IMR-90 (cell line): ENCODE measurements at regions of chr6 and their contacts with region 1.

Region 1: DNA sequence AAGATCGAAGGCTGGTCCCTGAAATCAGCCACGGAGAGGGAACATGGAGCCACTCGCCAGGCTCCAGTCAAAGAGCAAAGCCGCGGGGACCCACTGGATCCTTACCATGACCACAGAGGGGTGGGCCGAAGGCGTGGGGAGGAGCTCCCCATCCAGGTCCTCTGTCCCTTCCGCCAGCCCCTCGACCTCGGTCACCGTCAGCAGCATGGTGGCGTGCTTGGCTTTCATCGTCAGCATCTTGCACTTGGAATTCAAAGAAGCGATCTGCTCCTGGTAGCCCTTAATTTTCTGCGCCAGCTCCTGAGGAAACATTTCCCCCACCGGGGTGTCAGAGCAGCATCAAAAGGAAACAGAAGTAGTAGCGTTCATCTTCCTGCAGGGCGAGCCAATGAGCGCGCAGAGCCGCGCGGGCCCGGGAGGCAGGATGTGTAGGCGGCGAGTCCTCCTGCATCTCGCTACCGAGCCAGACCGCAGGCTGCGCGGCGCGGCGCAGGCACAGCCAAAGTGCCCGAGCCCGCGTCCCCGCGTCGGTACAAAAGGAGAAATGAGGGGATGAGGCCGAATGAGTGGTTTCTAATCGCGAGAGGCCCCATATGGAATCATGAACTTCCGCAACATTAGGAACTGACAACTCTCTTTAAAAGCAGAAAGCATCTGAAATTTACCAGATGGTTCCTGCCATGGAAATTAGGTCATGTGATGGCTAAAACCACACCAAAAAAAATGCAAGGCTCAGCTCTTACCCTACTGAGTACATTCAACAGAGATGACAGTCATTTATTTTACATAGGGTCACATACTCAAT is 335.2 kb downstream of the SYNE1 start:
- DNase-seq: peak; percentile 90
- ATAC-seq: peak; percentile 98
- H3K4me3 ChIP-seq: peak overlapping the region; percentile 77
- H3K27ac ChIP-seq: peak overlapping the region; percentile 86
- H3K4me1 ChIP-seq: peaks cover 5% of the 10 kb centered on the region; the same call in 1 of the 2 replicates
- H3K27me3 ChIP-seq: no peaks in the 10 kb centered on the region
- CTCF ChIP-seq: peak; percentile 49
- POLR2A ChIP-seq: peak; percentile 77
- RAD21 ChIP-seq: peak; percentile 37

Region 2: DNA sequence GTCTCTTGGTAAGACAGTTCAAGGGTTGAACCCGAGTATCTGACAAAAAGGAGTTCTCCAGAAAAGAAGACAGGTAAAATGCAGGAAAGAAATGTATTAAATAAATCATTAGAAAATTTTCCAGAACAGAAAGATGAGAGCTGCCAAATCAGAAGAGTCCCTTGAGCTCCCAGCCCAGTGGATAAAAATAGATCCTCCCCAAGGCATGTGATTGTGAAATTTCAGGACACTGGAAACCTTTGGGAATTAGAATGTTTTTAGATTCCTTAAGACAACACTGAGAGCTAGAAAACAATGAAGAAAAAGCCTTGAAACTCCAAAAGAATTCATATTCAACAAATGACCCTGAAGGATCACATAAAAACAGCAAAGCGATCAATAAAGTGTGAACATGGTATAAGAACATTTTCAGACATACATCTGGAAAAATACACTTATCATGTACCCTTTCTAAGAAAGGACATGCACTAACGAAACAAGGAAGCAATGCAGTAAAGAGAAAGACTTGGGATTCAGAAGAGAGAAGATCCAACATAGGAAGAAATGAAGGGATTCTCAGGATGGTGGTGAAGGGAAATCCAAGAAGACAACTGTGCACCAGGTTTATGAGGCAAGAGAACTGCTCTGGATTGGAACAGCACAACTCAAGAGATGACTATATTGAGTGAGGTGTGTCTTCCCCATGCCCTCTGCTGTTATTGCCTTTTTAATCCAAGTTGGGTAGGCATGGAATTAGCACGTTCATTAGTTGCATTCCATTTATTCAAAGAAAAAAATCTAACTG is 55.2 kb before region 1 on chr6:
- CTCF ChIA-PET with region 1: no interaction called
- POLR2A ChIA-PET with region 1: no interaction called
- dilution Hi-C with region 1: no loop called
- in situ Hi-C with region 1: no loop called
- intact Hi-C with region 1: no loop called
- DNase-seq: peak; percentile 54
- ATAC-seq: peak; percentile 59
- H3K4me3 ChIP-seq: no peak overlapping the region
- H3K27ac ChIP-seq: no peak overlapping the region
- H3K4me1 ChIP-seq: peaks cover 2% of the 10 kb centered on the region
- H3K27me3 ChIP-seq: no peaks in the 10 kb centered on the region
- CTCF ChIP-seq: no peak
- POLR2A ChIP-seq: no peak
- RAD21 ChIP-seq: no peak

Region 3: GRCh38 chr6:152318278-152318677 is 16.3 kb after region 1 on chr6:
- CTCF ChIA-PET with region 1: interaction called, 10 read pairs
- POLR2A ChIA-PET with region 1: interaction called, 6 read pairs
- dilution Hi-C with region 1: no loop called
- in situ Hi-C with region 1: no loop called
- intact Hi-C with region 1: no loop called
- DNase-seq: peak; percentile 43
- ATAC-seq: no peak
- H3K4me3 ChIP-seq: no peak overlapping the region
- H3K27ac ChIP-seq: no peak overlapping the region
- H3K4me1 ChIP-seq: peaks cover 11% of the 10 kb centered on the region
- H3K27me3 ChIP-seq: no peaks in the 10 kb centered on the region
- CTCF ChIP-seq: no peak
- POLR2A ChIP-seq: no peak
- RAD21 ChIP-seq: no peak

Region 4: GRCh38 chr6:152338335-152339125 is 36.6 kb after region 1 on chr6:
- CTCF ChIA-PET with region 1: interaction called, 7 read pairs
- POLR2A ChIA-PET with region 1: no interaction called
- dilution Hi-C with region 1: no loop called
- in situ Hi-C with region 1: no loop called
- intact Hi-C with region 1: loop called (anchors 1 kb)
- DNase-seq: peak; percentile 21
- ATAC-seq: peak; percentile 88
- H3K4me3 ChIP-seq: no peak overlapping the region
- H3K27ac ChIP-seq: no peak overlapping the region
- H3K4me1 ChIP-seq: no peaks in the 10 kb centered on the region
- H3K27me3 ChIP-seq: no peaks in the 10 kb centered on the region
- CTCF ChIP-seq: peak; percentile 65
- POLR2A ChIP-seq: no peak
- RAD21 ChIP-seq: peak; percentile 43; the same call in 1 of the 2 replicates

Region 5: GRCh38 chr6:152669895-152670294 is 367.9 kb after region 1 on chr6:
- CTCF ChIA-PET with region 1: no interaction called
- POLR2A ChIA-PET with region 1: no interaction called
- dilution Hi-C with region 1: no loop called
- in situ Hi-C with region 1: no loop called
- intact Hi-C with region 1: loop called (anchors 10 kb)
- DNase-seq: peak; percentile 60
- ATAC-seq: peak; percentile 79
- H3K4me3 ChIP-seq: no peak overlapping the region
- H3K27ac ChIP-seq: no peak overlapping the region
- H3K4me1 ChIP-seq: peaks cover 2% of the 10 kb centered on the region; the same call in 1 of the 2 replicates
- H3K27me3 ChIP-seq: no peaks in the 10 kb centered on the region
- CTCF ChIP-seq: peak; percentile 65
- POLR2A ChIP-seq: no peak
- RAD21 ChIP-seq: peak; percentile 71